Posterior cingulate gyrus (tissue), 11 donors: ENCODE measurements at regions of chr5 and their contacts with region 1.

Region 1: DNA sequence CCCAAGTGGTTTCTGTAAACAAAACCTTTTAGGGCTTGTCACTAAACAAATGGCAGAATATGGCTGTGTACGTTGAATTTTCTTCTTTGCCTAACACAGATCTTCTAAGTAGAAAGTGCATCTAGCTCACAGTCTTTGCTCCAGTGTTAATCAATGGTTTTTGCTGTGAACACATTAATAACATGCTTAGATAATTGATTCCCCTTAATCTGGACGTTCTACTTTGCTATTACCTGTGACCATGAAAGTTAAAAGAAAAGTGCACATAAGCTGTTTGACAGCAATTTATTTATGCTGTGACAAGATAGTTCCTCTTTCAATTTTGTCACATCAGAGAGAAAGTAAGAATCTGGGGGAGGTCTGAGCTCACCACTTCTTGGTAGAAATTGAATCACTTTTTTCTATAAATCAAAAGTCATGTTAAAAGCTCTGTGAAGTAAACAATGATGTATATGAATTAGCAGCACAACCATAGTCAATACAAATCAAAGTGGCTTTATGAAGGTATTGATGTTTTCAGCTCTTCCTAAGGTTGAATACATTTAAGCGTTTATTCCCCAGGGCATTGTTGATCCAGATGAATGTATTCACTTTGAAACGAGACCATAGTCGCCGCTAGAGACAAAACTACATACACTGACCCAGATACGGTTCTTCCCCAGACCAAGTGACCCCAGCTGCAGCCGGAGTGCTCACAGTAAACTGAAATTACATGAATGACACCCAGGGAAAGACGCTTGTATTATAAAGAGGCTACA is 174.6 kb upstream of the ZNF608 start:
- DNase-seq: no peak

Region 2: DNA sequence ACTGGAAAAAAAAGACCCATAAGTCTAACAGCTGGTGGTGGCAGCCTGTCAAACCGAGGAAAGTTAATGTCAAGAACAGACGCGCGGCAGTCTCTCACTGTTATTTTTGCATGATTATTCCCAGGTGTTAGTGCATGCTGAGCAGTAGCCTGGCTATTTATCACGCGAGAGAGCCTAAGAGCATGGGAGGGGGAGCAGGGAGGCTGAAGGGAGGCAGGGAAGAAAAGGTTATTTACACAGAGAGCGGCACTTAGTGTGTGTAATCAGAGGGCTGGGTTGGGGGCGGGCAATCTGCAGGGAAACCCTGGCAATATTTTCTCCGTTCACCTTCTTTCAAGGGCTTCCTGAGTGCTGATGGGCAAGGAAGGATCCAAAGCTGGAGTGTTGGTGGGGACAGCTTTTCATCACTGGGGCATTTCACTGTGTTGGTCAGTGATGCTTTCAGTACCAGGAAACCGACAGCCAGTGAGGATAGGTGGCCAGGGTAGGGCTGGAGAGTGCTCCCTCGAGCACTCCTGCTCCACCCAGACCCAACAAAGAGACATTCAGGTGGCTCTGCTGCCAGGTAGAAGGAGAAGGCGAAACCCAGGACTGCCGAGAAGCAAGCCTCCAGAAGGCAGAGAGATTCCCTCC is 214.2 kb before region 1 on chr5:
- intact Hi-C with region 1: no loop called
- DNase-seq: no peak

Region 3: GRCh38 chr5:124790301-124790894 is 130.7 kb before region 1 on chr5:
- intact Hi-C with region 1: no loop called
- DNase-seq: no peak

Region 4: DNA sequence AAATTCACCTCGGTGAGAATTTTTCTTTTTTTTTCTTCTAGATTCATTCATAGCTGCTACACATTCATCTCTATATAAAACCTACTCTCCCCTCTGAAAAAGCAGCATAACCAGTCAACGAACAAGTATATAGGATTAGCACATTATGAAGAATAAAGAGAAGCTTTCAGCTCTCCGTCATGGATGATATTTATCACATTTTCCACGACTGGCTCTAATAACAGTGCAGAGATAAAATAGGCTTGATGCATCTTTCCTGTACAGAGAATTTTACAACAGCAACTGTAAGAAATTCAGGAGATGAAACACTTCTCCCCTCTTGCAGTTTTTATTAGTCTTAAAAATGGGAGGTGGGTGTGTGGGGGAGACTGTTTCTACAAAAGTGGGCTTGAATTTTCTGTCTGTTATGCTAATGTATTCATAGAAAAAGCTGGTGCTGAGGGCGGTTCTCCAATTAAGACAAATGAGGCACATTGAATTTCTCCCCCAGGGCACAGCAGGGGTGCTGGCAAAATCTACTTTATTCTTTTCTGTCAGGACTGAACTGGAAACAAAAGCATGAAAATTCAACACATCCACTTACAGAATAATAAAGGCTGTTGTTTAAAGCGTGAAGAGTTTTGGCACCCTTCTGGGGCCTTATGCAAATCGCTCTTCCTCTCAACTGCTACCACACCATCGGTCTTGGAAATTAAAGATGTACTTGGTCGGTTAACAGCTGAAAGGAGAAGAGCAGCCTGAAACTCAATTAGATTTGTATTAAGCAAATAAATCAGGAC is 59.3 kb after region 1 on chr5:
- intact Hi-C with region 1: loop called (anchors 5 kb)
- DNase-seq: peak in 5 of 10 donors; percentile 10 to 82 (median 19)

Region 5: DNA sequence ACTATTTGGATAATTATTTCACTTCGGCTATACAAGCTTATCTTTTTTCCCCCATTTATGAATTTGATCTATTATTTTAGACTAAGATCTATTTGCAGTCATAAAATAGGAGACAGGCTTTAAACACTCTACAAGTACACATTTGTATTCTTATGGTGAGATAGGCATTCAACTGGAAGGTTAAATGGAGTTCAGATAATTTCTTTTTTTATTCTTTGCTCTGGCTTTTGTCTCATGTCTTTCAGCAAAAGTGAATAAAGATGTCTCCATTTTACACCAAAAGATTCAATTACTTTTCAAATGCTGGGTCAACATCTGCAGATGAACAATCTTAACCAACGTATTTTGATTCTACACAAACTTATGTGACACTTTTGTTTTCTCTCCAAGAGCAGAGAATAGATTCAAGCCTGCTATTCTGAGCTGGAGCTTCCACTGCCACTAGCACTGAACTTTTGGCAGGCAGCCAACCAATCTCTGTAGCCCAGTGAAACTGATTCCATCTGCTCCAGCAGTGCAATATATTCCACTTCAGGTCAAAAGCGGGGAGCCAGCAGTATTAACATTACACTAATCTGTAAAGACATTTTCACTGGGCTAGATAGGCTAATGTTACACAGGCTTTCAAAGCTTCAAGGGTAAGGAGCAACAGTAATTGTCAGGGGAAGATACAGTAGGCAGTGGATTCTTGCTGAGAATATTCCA is 277.3 kb after region 1 on chr5:
- intact Hi-C with region 1: no loop called
- DNase-seq: peak; percentile 37 to 91 (median 70)